ENCODE measurements at regions of chr1 and their contacts with region 1.

Region 1: GRCh38 chr1:192580351-192580962 is 4.9 kb downstream of the RGS1 start:
- DNase-seq: no peak
- H3K4me3 ChIP-seq: no peak overlapping the region
- CTCF ChIP-seq: peak; percentile 47

Region 2: GRCh38 chr1:192506741-192507155 is 73.7 kb before region 1 on chr1:
- CTCF ChIA-PET with region 1: interaction called, 16 read pairs
- POLR2A ChIA-PET with region 1: no interaction called
- DNase-seq: no peak
- H3K4me3 ChIP-seq: no peak overlapping the region
- CTCF ChIP-seq: peak; percentile 20

Region 3: DNA sequence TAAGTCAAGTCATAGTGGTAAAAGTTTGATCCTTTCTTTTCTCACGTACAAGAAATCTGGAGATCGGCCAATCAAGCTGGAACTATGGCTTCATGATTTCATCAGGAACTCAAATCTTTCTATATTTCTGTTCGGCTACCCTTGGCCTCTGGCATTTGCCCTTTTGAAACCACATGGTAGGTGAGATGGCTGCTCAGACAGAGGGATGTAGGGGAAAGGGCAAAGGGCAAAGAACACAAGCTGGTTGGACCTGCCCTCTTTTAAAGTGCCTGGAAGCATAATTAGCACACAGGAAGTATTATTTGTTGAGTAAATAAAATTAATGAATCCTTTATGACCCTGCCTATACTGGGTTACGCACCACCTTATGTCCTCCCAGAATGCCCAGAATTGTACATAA is 16.4 kb before region 1 on chr1:
- CTCF ChIA-PET with region 1: no interaction called
- POLR2A ChIA-PET with region 1: no interaction called
- DNase-seq: no peak
- H3K4me3 ChIP-seq: no peak overlapping the region
- CTCF ChIP-seq: no peak

Region 4: DNA sequence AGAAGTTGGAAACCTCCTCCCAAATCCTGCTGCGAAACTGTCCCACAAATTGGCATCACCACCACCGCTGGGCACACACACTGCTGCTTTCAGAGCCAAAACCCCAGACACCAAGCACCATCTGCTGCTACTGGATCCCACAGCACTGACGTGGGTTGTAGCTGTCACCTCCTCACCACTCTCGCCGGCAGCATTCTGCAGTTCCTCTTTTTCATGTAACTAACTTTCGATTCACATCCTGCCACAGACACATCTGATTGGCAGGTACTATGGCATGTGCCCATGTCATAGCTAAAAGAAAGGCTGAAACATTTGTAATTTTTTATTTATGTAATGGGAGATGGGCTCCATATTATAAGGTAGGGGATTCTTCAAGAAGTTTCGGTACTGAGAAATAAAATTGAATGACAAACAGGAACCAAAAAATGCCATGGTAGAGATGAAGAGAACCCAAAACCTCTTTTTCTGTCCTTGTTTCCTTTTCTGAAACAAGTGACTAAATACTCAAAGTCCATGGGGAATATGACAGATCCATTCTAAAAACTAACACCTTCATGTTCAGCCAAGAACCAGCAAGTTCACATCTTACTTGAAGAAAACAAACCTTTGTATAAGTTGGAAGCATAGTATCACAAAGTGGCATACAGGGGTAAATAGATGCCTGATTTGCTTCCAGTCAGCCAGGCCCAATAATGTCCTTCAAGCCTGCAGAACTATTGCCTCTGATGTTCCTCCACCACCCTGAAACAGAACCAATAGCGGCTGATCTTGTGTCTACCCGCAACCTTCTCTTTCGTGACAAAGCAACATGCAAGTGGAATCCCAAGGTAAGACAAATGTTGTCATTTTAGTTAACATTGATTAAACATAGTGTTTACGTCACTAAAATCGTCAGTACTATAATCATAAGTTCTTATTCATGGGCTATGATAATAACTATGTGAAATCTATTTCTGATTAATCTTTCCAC is 28.9 kb after region 1 on chr1:
- CTCF ChIA-PET with region 1: interaction called, 11 read pairs
- POLR2A ChIA-PET with region 1: no interaction called
- DNase-seq: no peak
- H3K4me3 ChIP-seq: no peak overlapping the region
- CTCF ChIP-seq: no peak

Region 5: GRCh38 chr1:192763746-192764145 is 183.3 kb after region 1 on chr1:
- CTCF ChIA-PET with region 1: no interaction called
- POLR2A ChIA-PET with region 1: no interaction called
- DNase-seq: peak; percentile 93
- H3K4me3 ChIP-seq: no peak overlapping the region
- CTCF ChIP-seq: no peak

Measured in AG04449 (cell line).